ENCODE measurements at regions of chr9 and their contacts with region 1.

Region 1: GRCh38 chr9:93682232-93682968 is 106.0 kb downstream of the PHF2 start:
- DNase-seq: peak; percentile 35 to 60 (median 51)
- H3K4me3 ChIP-seq: no peak overlapping the region
- H3K27ac ChIP-seq: no peak overlapping the region
- H3K4me1 ChIP-seq: peaks cover 0 to 2% (median 0%) of the 10 kb centered on the region in 4 experiments
- H3K27me3 ChIP-seq: peaks cover 0 to 2% (median 0%) of the 10 kb centered on the region in 5 experiments

Region 2: GRCh38 chr9:93576258-93577075 is 105.9 kb before region 1 on chr9 and contains the start of gene PHF2:
- CTCF ChIA-PET with region 1: no interaction called
- POLR2A ChIA-PET with region 1: no interaction called
- DNase-seq: peak; percentile 23 to 53 (median 33)
- H3K4me3 ChIP-seq: peak within 1 kb of the TSS; percentile 54 to 81 (median 77)
- H3K27ac ChIP-seq: peak within 1 kb of the TSS; percentile 54 to 81
- H3K4me1 ChIP-seq: peaks cover 0 to 34% (median 28%) of the 10 kb centered on the region in 4 experiments
- H3K27me3 ChIP-seq: no peaks in the 10 kb centered on the region

Region 3: DNA sequence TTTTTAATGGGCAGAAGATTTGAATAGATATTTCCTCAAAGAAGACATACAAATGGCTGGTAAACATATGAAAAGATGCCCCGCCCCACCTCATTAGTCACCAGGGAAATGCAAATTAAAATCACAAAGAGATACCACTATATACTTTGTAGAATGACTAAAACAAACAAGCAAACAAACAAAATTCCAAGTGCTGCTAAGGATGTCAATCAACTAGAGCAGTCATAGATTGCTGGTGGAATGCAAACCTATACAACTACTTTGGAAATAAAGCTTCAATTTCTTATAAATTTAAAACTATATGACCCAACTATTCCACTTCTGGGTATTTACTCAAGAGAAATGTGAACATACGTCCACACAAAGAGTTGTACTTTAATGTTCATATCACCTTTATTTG is 76.9 kb after region 1 on chr9:
- CTCF ChIA-PET with region 1: no interaction called
- POLR2A ChIA-PET with region 1: no interaction called
- DNase-seq: no peak
- H3K4me3 ChIP-seq: no peak overlapping the region
- H3K27ac ChIP-seq: no peak overlapping the region
- H3K4me1 ChIP-seq: no peaks in the 10 kb centered on the region
- H3K27me3 ChIP-seq: peaks cover 0 to 7% (median 0%) of the 10 kb centered on the region in 5 experiments

Region 4: DNA sequence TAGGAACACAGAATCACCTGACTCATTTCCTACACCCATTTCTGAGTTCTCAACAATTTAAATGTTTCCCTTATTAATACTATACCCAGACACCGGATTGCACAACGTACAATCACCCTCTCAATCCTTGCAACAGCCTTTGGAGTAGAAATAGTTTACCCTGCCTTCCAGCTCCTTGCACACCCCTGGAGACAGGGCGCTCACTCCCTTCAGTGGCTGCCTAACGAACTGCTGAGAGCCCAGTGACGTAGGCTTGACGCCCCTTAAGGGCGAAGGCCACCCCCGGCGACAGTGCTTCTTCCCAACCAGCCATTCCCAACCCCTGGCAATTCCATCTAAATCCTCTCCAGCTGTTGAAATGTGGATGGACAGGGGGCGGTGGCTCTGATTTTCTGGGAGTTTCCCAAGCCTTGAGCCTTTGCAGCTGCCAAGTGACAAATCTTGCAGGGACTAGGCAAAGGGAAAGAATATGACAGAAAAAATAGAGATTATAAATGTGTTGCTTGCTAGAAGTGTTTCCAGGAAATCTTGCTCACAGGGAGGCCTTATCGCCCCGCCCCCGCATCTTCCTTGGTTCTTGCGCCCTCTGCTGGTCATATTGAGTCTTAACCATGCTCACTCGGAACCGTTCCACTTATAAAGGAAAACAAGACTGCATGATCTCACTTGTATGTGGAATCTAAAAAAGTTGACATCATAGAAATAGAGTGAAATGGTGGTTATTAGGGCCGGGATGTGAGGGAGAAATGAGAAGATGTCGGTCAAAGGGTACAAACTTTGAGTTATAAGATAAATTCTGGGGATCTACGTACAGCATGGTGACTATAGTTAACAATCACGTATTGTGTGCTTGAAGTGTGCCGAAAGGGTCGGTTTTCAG is 280.4 kb after region 1 on chr9:
- CTCF ChIA-PET with region 1: interaction called, 91 read pairs
- POLR2A ChIA-PET with region 1: no interaction called
- DNase-seq: peak; percentile 85 to 92 (median 90)
- H3K4me3 ChIP-seq: no peak overlapping the region
- H3K27ac ChIP-seq: no peak overlapping the region
- H3K4me1 ChIP-seq: peaks cover 0 to 31% (median 26%) of the 10 kb centered on the region in 4 experiments
- H3K27me3 ChIP-seq: peaks cover 9 to 67% (median 33%) of the 10 kb centered on the region in 5 experiments

Measured in common myeloid progenitor, CD34-positive (primary cell).